Heart left ventricle (tissue), 16 donors: ENCODE measurements at regions of chr19 and their contacts with region 1.

Region 1: GRCh38 chr19:38693380-38694223 is 46.2 kb downstream of the ACTN4 start:
- DNase-seq: peak in 3 of 5 donors; percentile 61 to 70 (median 68)
- ATAC-seq: peak in 3 of 4 donors; percentile 21 to 48 (median 37)
- H3K4me3 ChIP-seq: peak overlapping the region in 3 of 12 donors; percentile 5 to 13 (median 11)
- H3K27ac ChIP-seq: peak overlapping the region; percentile 74 to 96 (median 90)
- H3K4me1 ChIP-seq: peaks cover 30 to 100% (median 88%) of the 10 kb centered on the region in 12 donors
- H3K27me3 ChIP-seq: no peaks in the 10 kb centered on the region
- CTCF ChIP-seq: no peak
- POLR2A ChIP-seq: no peak

Region 2: DNA sequence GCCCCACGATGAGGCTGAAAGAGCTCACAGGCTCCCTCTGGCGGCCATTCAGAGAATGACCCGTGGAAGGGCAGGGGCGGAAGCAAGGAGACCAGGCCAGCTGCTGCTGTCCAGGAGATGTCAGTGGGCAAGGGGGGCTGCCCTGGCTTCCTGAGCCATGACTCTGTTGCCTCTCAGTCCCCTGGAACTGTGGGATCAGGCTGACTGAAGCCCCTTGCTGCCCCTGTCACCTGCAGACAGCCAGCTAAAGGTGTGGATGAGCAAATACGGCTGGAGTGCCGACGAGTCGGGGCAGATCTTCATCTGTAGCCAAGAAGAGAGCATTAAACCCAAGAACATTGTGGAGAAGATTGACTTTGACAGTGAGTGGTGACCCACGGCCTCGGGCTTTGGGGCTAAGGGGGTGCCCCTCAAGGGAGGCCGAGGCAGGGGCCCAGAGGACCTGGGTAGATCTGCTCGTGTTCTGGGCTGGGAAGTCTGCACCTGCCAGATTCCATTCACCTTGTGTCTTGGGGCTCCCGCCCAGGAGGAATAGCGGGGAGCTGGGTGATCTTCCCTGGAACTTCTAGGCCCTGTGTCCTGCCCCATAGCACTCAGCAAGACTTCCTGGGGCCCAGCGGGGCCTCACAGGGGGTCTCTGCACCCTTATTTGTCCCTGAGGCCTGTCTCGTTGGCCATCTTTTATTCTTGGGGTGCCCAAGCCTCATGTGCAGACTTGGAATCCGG is 58.7 kb before region 1 on chr19:
- intact Hi-C with region 1: no loop called
- DNase-seq: peak; percentile 64 to 87 (median 75)
- ATAC-seq: peak in 3 of 4 donors; percentile 47 to 55 (median 50)
- H3K4me3 ChIP-seq: no peak overlapping the region
- H3K27ac ChIP-seq: peak overlapping the region in 10 of 12 donors; percentile 20 to 52 (median 38)
- H3K4me1 ChIP-seq: peaks cover 0 to 34% (median 23%) of the 10 kb centered on the region in 12 donors
- H3K27me3 ChIP-seq: no peaks in the 10 kb centered on the region
- CTCF ChIP-seq: peak; percentile 91 to 97 (median 95)
- POLR2A ChIP-seq: no peak

Region 3: GRCh38 chr19:38658462-38659306 is 34.9 kb before region 1 on chr19:
- intact Hi-C with region 1: loop called in 4 of 10 experiments (anchors 5 kb)
- DNase-seq: peak in 1 of 5 donors; percentile 66
- ATAC-seq: peak; percentile 74 to 83 (median 76)
- H3K4me3 ChIP-seq: peak overlapping the region in 5 of 12 donors; percentile 3 to 38 (median 15)
- H3K27ac ChIP-seq: peak overlapping the region; percentile 71 to 99 (median 96)
- H3K4me1 ChIP-seq: peaks cover 55 to 100% (median 99%) of the 10 kb centered on the region in 12 donors
- H3K27me3 ChIP-seq: no peaks in the 10 kb centered on the region
- CTCF ChIP-seq: no peak
- POLR2A ChIP-seq: no peak

Region 4: DNA sequence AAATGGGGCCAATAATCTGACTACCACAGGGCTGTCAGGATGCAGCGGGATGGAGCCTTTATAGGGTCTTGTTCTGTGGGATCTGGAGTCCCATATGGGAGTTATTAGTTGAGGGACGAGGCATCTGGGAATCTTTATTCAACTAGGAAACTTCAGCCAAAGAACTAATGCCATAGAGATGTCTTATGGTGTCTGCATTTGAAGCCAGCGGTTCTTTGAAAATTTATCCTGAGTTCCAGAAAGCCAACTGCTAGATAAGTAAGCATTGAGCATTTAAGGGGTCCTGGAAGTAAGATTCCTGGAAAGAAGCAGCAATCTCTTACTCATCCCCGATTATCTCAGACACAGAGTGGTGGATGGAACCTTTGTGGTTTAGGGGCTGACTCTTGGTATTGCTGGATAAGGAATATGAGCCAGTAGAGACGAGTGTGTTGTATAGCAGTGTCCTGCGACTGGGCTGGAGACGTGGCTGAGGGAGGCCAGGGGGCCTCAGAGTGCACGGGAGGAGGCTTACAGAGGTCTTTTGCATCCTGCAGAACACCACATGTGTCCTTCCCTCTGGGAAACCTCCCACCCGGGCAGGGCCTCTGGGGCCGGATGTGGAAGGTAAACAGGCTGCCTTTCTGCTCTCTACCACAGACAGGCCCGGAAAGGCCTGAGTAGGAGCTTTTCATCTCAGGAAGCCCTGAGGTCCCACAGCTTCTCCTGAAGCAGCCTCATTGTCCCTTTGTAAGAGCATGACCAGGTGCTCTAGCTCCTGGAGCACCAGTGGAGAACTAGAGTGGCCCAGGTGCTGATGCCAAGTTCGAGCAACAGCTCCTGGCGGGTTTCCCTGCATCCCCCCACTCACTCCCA is 17.4 kb before region 1 on chr19:
- intact Hi-C with region 1: no loop called
- DNase-seq: peak in 3 of 5 donors; percentile 55 to 72 (median 65)
- ATAC-seq: peak; percentile 4 to 50 (median 6)
- H3K4me3 ChIP-seq: no peak overlapping the region
- H3K27ac ChIP-seq: peak overlapping the region; percentile 83 to 96 (median 90)
- H3K4me1 ChIP-seq: peaks cover 41 to 97% (median 88%) of the 10 kb centered on the region in 12 donors
- H3K27me3 ChIP-seq: no peaks in the 10 kb centered on the region
- CTCF ChIP-seq: peak in 1 of 12 donors; percentile 8
- POLR2A ChIP-seq: no peak

Region 5: DNA sequence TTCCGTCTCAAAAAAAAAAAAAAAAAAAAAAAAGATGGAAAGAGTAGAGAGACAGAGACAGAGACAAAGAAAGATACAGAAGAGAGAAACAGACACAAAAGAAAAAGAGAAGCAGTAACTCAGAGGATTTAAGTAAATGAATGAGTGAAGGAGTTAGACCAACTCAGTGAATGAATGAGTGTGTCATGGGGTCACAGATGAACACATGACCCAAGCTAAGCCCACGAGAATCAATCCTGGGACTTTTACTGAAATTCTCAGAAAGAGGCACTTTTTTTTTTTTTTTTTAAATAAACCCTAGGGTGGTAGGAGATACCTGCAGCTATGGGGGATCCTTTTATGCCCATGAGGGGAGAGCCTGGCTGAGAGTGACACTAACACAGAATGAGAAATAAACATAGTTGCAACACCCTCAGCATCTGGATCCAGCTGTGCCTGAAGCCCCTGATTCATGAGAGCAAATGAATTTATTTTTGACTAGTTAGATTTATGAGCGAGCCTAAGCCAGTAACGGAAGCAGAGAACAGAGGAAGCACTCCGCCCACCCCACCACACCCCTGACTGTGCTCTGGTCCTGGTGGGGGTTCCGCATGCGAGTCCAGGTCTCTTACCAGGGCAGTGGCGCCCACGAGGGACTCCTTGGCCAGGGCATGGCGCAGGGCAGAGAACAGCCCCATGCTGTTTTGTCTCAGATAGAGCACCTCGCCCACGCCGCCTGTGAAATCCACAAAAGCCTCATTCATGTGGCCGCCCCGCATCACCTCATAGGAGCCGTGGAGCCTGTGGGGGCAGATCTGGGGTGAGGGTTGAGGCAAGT is 46.0 kb after region 1 on chr19:
- intact Hi-C with region 1: no loop called
- DNase-seq: peak in 1 of 5 donors; percentile 27
- ATAC-seq: no peak
- H3K4me3 ChIP-seq: no peak overlapping the region
- H3K27ac ChIP-seq: no peak overlapping the region
- H3K4me1 ChIP-seq: peaks cover 0 to 18% (median 6%) of the 10 kb centered on the region in 12 donors
- H3K27me3 ChIP-seq: no peaks in the 10 kb centered on the region
- CTCF ChIP-seq: no peak
- POLR2A ChIP-seq: no peak